ENCODE measurements at regions of chr16 and their contacts with region 1.

Region 1: GRCh38 chr16:87278191-87279095 is 38.7 kb downstream of the C16orf95 start:
- DNase-seq: peak in 1 of 2 donors; percentile 88
- H3K4me3 ChIP-seq: no peak overlapping the region
- H3K27ac ChIP-seq: no peak overlapping the region
- H3K4me1 ChIP-seq: no peaks in the 10 kb centered on the region
- H3K27me3 ChIP-seq: no peaks in the 10 kb centered on the region
- CTCF ChIP-seq: peak; percentile 86 to 92 (median 89)

Region 2: GRCh38 chr16:87067836-87068761 is 210.3 kb before region 1 on chr16:
- intact Hi-C with region 1: loop called (anchors 2 kb)
- DNase-seq: no peak
- H3K4me3 ChIP-seq: peak overlapping the region in 1 of 2 donors; percentile 44
- H3K27ac ChIP-seq: peak overlapping the region; percentile 77 to 83
- H3K4me1 ChIP-seq: peaks cover 0 to 5% of the 10 kb centered on the region in 2 donors
- H3K27me3 ChIP-seq: no peaks in the 10 kb centered on the region
- CTCF ChIP-seq: no peak

Region 3: DNA sequence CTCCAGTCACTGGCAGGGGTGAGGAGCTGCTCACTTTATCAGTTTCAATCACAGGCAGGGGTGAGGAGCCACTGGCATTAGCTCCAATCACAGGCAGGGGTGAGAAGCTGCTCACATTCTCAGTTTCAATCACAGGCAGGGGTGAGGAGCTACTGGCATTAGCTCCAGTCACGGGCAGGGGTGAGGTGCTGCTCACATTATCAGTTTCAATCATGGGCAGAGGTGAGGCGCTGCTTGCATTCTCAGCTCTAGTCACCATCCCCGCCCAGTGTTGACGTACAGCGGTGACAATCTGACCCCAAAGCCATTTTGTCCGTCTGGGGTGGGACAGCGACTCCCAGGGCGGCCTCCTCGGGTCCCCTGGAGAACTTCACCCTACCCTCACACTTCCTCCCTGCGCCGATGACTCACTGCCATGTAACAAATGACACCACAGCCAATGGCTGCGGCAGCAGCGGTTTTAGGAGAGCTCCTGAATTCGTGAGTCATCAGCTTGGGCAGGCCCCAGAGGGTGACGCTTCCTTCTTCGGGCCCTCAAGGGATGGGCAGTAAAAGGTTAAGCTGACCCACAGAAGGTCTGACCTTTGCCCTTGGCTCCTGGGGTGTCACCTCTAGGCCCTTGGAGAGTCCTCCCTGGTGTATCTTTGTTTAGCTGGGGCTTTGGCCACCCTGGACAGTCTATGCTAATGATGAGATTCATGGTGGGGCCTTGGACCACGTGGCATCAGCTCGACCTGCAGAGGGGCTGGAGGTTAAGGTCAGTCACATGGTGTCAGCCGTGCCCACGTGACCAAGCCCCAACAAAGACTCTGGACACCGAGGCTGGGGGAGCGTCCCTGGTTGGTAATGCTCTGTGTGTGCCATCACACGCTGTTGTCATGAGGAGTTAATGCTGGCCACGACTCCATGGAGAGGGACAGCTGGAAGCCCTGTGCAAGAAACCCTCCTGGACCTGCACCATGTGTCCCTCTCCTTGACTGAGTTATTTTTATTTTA is 133.0 kb before region 1 on chr16:
- intact Hi-C with region 1: no loop called
- DNase-seq: no peak
- H3K4me3 ChIP-seq: no peak overlapping the region
- H3K27ac ChIP-seq: no peak overlapping the region
- H3K4me1 ChIP-seq: peaks cover 0 to 5% of the 10 kb centered on the region in 2 donors
- H3K27me3 ChIP-seq: no peaks in the 10 kb centered on the region
- CTCF ChIP-seq: no peak

Region 4: DNA sequence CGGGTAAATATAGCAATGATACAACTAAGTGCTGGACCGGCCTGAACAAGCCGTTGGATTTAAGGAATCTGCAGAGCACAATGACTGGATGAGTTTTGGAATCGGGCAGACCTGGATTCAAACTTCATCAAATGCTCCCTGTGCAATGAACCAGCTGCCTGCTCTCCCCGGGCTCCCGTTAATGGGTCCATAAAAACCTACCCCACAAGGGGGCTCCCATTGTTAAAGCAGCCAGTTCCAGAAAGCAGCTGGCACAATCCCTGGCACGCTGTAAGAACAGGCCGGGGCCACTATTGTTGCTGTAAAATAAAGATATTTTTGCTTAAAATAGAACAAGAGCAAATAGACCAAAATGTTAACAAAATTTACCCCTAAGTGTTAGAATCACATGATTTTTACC is 93.1 kb before region 1 on chr16:
- intact Hi-C with region 1: loop called (anchors 1 kb)
- DNase-seq: no peak
- H3K4me3 ChIP-seq: no peak overlapping the region
- H3K27ac ChIP-seq: no peak overlapping the region
- H3K4me1 ChIP-seq: no peaks in the 10 kb centered on the region
- H3K27me3 ChIP-seq: no peaks in the 10 kb centered on the region
- CTCF ChIP-seq: peak in 1 of 3 experiments; percentile 22

Region 5: GRCh38 chr16:87252269-87252970 is 26.0 kb before region 1 on chr16:
- intact Hi-C with region 1: no loop called
- DNase-seq: peak in 1 of 2 donors; percentile 19
- H3K4me3 ChIP-seq: no peak overlapping the region
- H3K27ac ChIP-seq: no peak overlapping the region
- H3K4me1 ChIP-seq: no peaks in the 10 kb centered on the region
- H3K27me3 ChIP-seq: no peaks in the 10 kb centered on the region
- CTCF ChIP-seq: no peak

Region 6: GRCh38 chr16:87263471-87263961 is 14.9 kb before region 1 on chr16:
- intact Hi-C with region 1: no loop called
- DNase-seq: no peak
- H3K4me3 ChIP-seq: no peak overlapping the region
- H3K27ac ChIP-seq: no peak overlapping the region
- H3K4me1 ChIP-seq: no peaks in the 10 kb centered on the region
- H3K27me3 ChIP-seq: no peaks in the 10 kb centered on the region
- CTCF ChIP-seq: no peak

Region 7: DNA sequence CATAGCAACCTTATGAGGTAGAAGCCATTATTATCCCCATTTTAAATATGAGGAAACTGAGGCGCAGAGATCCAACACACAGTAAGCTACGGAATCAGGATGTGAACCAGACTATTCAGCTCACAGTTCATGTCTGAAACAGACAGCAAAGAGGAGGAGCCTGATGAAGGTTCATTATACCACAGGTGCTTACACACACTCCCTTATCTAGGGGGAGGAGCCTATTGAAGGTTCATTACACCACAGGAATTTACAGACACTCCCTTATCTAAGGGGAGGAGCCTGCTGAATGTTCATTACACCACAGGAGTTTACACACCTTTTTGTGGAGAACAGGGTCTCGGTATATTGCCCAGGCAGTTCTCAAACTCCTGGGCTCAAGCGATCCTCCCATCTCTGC is 16.8 kb after region 1 on chr16:
- intact Hi-C with region 1: no loop called
- DNase-seq: no peak
- H3K4me3 ChIP-seq: no peak overlapping the region
- H3K27ac ChIP-seq: no peak overlapping the region
- H3K4me1 ChIP-seq: no peaks in the 10 kb centered on the region
- H3K27me3 ChIP-seq: no peaks in the 10 kb centered on the region
- CTCF ChIP-seq: no peak

Measured in ascending aorta (tissue), 2 donors.